OCI-LY7 (cell line): ENCODE measurements at regions of chr2 and their contacts with region 1.

Region 1: GRCh38 chr2:65432227-65433190 is at the start of gene SPRED2:
- DNase-seq: peak; percentile 92
- H3K4me3 ChIP-seq: peak within 1 kb of the TSS; percentile 93
- H3K27ac ChIP-seq: peak within 1 kb of the TSS; percentile 77
- H3K4me1 ChIP-seq: peaks cover 44% of the 10 kb centered on the region
- CTCF ChIP-seq: no peak
- total RNA-seq, gene SPRED2: 4.9 and 8.0 TPM in 2 replicates

Region 2: GRCh38 chr2:65056215-65057053 is 376.1 kb before region 1 on chr2 and contains the start of gene CEP68:
- CTCF ChIA-PET with region 1: no interaction called
- POLR2A ChIA-PET with region 1: no interaction called
- intact Hi-C with region 1: loop called (anchors 5 kb)
- DNase-seq: peak; percentile 99
- H3K4me3 ChIP-seq: peak within 1 kb of the TSS; percentile 82
- H3K27ac ChIP-seq: peak within 1 kb of the TSS; percentile 56
- H3K4me1 ChIP-seq: peaks cover 68% of the 10 kb centered on the region
- CTCF ChIP-seq: no peak
- total RNA-seq, gene CEP68: 7.3 and 8.7 TPM in 2 replicates

Region 3: GRCh38 chr2:65186872-65187851 is 245.3 kb before region 1 on chr2:
- CTCF ChIA-PET with region 1: no interaction called
- POLR2A ChIA-PET with region 1: no interaction called
- intact Hi-C with region 1: no loop called
- DNase-seq: peak; percentile 82
- H3K4me3 ChIP-seq: no peak overlapping the region
- H3K27ac ChIP-seq: no peak overlapping the region
- H3K4me1 ChIP-seq: peaks cover 9% of the 10 kb centered on the region
- CTCF ChIP-seq: peak; percentile 94

Region 4: GRCh38 chr2:65300761-65301711 is 131.5 kb before region 1 on chr2:
- CTCF ChIA-PET with region 1: no interaction called
- POLR2A ChIA-PET with region 1: interaction called, 4 read pairs
- intact Hi-C with region 1: loop called (anchors 1 kb)
- DNase-seq: peak; percentile 89
- H3K4me3 ChIP-seq: peak overlapping the region; percentile 44
- H3K27ac ChIP-seq: peak overlapping the region; percentile 86
- H3K4me1 ChIP-seq: peaks cover 50% of the 10 kb centered on the region
- CTCF ChIP-seq: 0 out of 2 replicates have a peak, but pooled peaks have one; percentile 31

Region 5: DNA sequence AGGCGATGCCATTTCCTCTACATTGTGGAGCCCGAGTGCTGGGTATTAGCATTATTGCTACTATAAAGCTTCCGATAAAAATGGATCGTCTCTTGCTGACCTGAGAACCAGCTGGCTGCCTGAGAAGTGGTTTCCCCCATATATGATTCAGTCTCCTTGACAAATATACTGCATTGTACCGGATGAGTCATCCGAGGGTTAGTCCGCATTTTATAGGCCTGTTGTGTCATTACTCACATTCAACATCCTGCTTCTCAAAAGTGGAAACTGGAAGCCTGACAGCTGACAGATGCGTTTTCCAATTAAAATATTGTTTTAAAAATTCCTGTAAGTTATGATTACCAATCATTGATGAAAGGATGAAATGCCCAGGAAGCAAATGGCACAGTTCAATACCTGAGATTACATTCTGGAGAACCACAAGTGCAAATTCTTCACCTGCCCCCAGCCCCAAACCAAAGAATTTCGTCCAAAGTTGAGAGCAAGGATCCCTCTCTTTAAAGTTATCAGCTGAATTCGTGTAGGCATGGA is 65.8 kb before region 1 on chr2:
- CTCF ChIA-PET with region 1: no interaction called
- POLR2A ChIA-PET with region 1: interaction called, 8 read pairs
- intact Hi-C with region 1: loop called (anchors 1 kb)
- DNase-seq: peak; percentile 71
- H3K4me3 ChIP-seq: peak overlapping the region; percentile 68
- H3K27ac ChIP-seq: peak overlapping the region; percentile 85
- H3K4me1 ChIP-seq: peaks cover 95% of the 10 kb centered on the region
- CTCF ChIP-seq: no peak

Region 6: DNA sequence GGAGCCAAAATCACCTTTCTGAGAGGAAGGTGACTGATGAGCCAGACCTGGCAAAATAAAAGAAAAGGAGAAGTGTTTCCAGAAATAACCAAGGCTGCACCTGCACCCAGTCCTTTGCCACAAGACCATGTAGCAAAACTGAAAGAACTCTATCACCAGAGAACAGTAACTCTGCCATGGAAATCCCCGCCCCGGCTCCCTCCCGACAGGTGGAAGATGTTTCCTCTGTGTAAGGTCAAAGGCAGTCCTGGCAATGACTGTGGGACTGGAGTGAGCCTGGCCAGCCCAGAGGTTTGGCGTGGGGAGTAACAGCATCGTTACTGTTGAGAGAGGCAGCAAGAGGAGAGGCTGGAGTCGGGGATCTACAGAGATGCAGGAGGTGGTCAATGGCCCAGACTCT is 42.4 kb before region 1 on chr2:
- CTCF ChIA-PET with region 1: no interaction called
- POLR2A ChIA-PET with region 1: interaction called, 7 read pairs
- intact Hi-C with region 1: loop called (anchors 2 kb)
- DNase-seq: peak; percentile 89
- H3K4me3 ChIP-seq: peak overlapping the region; percentile 60
- H3K27ac ChIP-seq: peak overlapping the region; percentile 96
- H3K4me1 ChIP-seq: peaks cover 99% of the 10 kb centered on the region
- CTCF ChIP-seq: no peak